ENCODE measurements at regions of chr2 and their contacts with region 1.

Region 1: DNA sequence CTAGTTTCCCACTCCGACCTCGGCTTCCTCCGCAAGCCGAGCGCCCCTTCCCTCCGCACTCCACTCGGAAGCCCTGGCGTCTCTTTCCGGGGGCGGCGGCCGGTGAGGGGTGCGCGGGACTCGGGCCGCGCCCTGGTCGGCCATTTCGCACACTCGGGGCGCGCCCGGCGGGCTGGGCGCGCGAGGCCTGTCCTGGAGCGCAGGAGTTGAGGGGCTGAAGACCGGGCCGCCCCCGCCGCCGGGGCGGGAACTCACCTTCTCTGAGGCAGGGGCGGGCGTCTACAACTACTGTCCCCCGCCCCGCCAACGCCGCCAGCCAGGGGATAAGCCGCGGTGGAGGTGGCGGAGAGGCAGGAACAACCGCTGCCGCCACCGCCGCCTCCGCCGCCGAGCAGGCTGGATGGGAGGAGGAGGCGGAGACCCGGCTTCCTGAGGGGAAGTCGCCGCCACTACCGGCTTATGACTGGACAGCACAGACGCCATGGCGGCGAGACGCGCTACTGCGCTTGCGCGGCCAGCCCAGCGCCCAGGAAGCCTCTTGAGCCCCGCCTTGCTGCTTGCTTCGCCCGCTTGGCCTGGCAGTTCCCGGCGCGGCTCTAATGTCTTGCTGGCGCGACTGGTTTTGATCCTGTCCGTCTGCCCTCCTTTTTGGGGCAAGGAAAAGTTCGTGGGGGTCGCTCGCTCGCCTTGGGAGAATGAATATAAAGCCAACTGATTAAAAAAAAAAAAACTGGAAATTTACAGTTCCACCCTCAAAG is at the start of gene KRCC1:
- DNase-seq: peak; percentile 90 to 99 (median 96)

Region 2: DNA sequence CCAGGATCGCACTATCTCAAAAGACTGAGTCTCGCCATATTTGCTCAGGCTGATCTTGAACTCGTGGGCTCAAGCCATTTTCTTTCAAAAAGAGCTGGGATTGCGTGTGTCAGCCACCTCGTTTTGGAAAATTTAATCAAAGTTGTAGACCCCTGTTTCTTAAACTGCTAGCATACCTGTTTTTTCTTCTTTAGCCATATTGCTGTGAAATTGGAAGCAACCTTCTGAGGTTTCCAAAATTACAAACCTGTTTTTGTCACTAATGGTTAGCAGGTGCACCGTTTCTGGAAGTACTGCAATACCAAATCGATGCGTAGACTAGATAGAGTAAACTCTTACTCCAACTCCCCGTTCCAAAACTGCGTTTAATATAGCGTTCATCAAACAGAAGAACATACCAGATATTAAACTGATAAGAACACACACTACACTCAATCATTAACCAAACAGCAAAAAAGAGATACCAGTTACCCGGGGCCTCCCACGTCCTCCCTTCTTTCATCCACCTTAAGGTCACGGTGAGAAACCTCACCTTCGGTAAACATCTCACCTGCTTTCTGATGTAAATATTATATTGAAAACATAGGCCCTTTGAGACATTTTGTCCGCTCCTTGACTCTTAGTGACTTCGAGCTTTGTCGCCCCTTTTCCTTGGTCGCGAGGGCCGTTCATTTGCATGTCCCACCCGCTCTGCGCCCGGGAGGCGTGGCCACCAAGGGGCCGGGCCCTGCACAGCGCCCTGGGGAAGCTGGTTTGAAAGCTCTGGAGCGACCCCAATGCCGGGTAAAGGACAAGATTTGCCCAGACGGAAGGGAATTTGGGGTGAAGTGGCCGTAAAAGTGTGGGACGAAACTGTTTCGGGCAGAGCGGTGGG is 39.2 kb before region 1 on chr2 and contains the start of gene RNU2-63P:
- intact Hi-C with region 1: loop called (anchors 5 kb)
- DNase-seq: peak; percentile 67 to 91 (median 81)

Region 3: DNA sequence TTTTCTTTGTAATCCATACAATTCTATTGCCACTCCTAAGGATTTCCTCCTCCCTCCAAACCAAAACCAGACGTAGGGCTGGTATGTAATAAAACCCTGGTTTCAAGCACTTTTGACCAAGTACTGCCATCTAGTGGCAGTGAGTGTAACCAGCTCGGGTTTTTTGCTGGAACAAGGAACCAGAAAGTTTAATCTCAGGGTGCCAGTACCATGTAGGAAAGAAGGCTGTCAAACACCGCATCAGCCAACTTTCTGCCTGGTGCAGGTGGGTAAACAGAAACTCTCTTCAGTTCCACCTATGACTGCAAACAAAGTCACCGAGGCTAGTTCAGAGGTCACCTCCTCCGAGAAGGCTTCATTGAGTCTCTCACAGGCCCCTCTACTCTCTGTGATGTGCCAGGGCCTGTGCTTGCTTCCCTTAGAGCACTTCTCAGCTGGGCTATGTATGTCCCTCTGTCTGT is 104.4 kb after region 1 on chr2:
- intact Hi-C with region 1: loop called (anchors 2 kb)
- DNase-seq: peak in 41 of 42 donors; percentile 34 to 90 (median 71)

Region 4: GRCh38 chr2:88408528-88409269 is 353.1 kb after region 1 on chr2:
- intact Hi-C with region 1: no loop called
- DNase-seq: no peak